RWPE1 (cell line): ENCODE measurements at regions of chr1 and their contacts with region 1.

Region 1: DNA sequence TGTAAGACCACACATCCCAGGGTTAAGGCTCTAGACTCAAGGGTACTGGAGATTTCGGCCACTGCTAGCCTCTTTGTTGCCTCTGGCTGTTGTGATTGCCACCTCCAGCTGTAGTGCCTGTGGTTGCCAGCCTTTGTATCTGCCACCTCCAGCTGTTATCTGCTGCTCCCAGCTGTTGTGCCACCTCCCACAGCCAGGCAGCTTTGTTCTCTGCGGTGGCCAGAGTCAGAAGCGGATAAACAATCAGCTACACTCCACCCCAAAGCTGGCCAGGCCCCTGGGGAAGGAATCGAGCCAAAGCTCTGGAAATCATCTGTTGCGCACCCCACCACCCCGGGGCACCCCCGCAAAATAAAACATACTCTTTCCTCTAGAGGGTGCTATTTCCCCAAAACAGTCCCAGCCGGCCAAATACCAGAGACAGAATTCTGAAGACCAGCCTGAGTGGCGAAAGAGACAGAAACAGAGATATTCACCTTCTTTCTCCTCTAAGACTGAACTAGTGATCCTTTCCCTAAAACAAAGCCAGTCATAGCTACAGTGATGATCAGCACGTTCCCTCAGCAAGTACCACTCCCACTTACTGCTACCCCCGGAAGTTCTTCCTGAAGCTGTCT is 14.8 kb upstream of the PIGM start:
- DNase-seq: peak; percentile 70
- H3K27ac ChIP-seq: no peak overlapping the region
- CTCF ChIP-seq: peak; percentile 46

Region 2: DNA sequence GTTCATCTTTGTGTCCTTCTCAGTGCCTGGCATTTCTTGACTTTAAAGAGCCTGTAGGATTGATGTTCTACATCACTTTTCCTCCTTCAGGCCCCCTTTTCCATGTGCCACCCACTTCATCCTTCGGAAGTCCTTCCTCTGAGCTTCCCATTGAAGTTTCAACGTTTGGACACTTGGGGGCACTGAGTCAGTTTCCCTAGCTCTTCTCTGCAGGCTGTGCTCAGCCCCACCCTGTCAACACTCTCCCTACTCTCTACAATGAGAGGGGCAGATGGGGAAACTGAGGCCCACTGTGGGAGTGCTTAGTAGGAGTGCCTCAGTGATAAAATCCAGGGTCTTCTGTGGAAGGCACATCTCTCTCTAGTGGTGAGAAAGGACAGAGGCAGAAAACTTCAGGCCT is 11.5 kb after region 1 on chr1:
- CTCF ChIA-PET with region 1: interaction called, 10 read pairs
- POLR2A ChIA-PET with region 1: no interaction called
- DNase-seq: no peak
- H3K27ac ChIP-seq: no peak overlapping the region
- CTCF ChIP-seq: no peak

Region 3: DNA sequence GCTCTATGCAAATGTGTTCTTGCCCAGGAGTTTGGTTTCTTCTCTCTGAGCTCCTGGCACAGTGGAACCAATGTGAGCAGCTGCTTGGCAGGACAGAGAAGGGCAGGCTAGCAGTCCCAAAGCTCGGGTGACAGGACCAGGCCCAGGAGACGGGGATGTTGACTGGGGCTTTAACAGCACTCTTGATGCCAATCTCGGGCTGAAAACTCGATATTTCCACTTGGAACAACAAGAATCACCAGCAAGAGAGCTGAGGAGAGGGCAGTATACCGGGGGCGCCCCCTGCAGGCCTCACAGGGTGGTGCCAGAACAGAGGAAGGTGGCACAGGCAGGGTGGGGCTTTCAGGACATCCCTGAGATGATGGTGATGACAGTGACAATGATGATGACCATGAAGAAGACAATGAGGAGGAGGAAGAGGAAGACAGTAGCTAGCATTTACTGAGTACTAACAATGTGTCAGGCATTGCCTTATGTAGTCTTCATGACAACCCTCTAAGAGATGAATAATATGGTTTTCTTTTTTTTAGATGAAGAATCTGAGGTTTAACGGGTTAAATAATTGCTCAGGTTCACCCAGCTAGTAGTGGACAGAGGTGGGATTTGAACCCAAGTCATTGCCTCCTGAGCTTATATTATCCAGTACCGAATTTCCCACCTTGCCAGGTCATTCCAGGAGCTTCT is 32.1 kb after region 1 on chr1:
- CTCF ChIA-PET with region 1: interaction called, 47 read pairs
- POLR2A ChIA-PET with region 1: interaction called, 7 read pairs
- DNase-seq: peak; percentile 14
- H3K27ac ChIP-seq: no peak overlapping the region
- CTCF ChIP-seq: no peak; the same call in 1 of the 2 replicates

Region 4: DNA sequence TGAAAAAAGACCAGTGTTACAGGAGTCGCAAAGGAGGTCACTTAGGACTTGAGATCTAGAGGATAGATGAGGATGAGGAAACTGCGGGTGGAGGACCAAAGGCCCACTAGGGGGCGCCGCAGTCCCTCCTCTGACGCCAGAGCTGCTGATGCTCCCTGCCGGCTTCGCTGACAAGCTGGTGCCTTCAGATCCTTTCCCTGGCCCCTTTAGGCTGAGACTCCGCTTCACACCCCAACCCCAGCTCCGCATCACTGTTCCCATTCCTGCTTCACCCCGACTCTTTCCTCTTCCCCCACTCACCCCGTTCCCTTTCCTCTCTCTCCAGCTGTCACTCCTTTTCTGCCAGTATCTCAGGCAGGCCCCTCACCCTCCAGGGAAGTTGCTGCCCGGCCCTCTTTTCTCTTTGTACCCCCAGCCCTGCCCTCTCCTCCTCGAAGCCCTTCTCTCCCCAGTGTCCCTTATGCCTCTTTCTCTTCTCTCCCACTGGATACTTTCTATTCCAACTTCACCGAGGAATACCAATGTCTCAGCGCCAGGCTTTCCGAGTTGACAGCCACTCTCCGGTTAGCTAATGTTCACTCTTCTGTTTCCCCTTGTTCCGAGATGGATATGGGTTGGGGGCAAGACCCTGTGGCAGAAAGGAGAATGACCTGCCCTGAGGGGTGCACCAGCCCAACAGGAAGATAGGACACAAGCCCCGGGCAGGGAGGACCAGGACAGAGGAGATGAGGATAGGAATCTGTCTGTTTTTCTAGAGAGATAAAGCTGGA is 39.3 kb after region 1 on chr1:
- CTCF ChIA-PET with region 1: interaction called, 47 read pairs
- POLR2A ChIA-PET with region 1: interaction called, 7 read pairs
- DNase-seq: peak; percentile 51
- H3K27ac ChIP-seq: no peak overlapping the region
- CTCF ChIP-seq: no peak; the same call in 1 of the 2 replicates

Region 5: DNA sequence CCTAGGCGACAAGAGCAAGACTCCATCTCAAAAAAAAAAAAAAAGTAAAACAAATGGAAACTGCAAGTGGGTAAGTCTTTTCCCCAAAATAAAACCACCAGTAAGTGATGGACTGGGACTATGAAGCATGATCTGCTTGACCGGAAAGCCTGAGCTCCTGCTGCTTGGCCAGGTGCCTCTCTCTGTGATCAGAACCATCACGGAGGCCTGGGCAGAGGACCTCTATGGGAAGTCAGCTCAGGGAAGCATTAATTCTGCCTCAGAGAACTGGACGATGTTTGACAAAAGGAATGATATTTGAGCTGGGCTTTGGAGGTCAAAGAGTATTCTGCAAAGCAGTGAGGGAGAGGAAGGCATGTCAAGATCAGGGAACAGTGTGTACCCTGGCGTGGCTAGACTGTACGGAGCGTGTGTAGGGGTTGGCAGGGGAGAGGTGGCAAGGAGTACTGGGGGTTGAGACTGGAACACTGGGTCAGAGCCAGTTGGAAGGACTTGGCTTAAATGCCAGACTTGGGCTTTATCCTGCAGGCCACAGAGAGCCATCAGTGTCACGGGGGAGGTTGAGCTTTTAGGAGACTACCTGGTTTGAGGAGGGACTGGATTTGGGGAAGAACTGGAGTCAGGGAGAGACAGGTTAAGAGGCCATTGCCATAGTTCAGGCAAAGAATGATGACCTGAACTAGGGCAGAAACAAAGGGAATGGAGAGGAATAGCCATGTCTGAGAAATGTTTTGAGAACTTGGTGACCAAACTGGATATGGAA is 85.4 kb after region 1 on chr1:
- CTCF ChIA-PET with region 1: no interaction called
- POLR2A ChIA-PET with region 1: no interaction called
- DNase-seq: no peak
- H3K27ac ChIP-seq: no peak overlapping the region
- CTCF ChIP-seq: no peak